Dendritic cell treated with granulocyte-macrophage colony-stimulating factor and Interleukin-4, amounts not matched to agents 40 ng/mL and 50 ng/mL, for 4 days (primary cell): ENCODE measurements at regions of chr7 and their contacts with region 1.

Region 1: DNA sequence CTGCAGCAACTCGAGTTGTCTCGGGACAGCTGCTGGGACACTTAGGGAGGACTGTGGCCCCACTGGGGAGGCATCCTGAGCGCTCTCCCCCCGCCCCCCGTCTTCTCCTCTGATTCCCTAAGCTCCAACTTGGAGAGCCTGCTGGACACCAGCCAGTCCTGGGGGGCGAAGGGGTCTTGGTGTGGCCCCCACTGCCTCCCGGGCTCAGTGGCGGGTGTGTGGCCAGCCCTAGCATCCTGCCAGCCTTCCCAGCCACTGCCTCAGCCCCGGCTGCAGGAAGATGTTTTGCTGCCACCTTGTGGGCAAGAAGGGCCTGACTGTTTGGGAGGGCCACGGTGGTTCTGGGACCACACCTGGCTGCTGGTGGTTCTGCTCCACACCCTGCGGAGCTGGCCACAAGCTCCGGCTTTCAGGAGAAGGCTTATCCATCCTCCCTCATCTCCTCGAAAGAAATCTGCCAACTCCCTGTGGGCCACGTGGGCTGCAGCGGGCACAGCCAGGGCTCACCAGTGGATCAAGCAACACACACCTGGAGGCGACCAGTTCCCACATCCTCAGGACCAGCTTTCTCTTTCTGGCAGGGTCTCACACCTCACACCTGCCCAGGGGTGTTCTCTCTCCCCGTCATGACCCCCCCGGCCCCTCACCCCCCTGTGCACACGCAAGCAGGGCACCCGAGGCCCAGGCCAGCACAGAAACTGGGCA is 24.8 kb downstream of the AGAP3 start:
- H3K4me3 Mint-ChIP-seq: no peak overlapping the region
- H3K27ac Mint-ChIP-seq: no peak overlapping the region
- H3K4me1 Mint-ChIP-seq: peaks cover 46% of the 10 kb centered on the region
- H3K27me3 Mint-ChIP-seq: peaks cover 25% of the 10 kb centered on the region

Region 2: DNA sequence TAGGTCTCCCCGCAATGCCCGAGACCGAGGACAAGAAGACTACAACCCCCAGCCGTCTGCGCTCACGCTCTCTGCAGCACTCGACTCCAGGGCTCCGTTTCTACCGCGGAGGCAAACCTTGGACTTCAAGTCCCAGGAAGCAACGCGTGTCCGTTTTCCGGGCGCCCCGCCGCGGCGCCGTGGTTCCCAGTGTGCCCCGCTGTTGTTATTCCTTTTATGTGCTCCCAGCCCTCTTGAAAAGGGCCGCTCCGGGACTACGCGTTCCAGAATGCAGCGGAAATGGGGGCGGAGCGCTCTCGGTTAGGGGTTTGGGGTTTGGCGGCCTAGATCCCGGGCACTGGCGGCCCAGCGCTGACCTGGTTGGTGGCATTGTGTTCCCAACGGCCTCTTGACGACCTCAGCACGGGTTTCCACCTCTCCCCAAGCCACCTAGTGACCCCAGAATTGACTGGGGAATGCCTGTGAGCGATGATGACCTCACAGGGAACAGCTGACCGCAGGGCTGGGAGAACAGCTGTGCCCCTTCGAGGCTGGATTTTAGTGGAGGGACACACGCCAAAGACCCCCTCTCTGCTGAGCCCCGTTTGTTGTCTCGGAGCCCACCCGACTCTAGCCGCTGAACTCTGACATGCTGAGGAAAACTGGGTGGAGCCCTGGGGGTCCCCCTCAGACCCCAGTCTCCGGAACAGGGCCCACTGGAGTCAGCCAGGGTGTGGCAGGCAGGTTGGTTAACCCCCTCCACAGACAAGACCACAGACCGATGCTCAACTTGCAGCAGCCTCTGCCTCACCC is 52.9 kb before region 1 on chr7:
- intact Hi-C with region 1: loop called (anchors 10 kb)
- H3K4me3 Mint-ChIP-seq: peak overlapping the region; percentile 91
- H3K27ac Mint-ChIP-seq: peak overlapping the region; percentile 92
- H3K4me1 Mint-ChIP-seq: peaks cover 68% of the 10 kb centered on the region
- H3K27me3 Mint-ChIP-seq: no peaks in the 10 kb centered on the region

Region 3: GRCh38 chr7:151080522-151081169 is 30.4 kb before region 1 on chr7 and contains the start of gene FASTK:
- intact Hi-C with region 1: loop called (anchors 2 kb)
- H3K4me3 Mint-ChIP-seq: peak within 1 kb of the TSS; percentile 86
- H3K27ac Mint-ChIP-seq: peak within 1 kb of the TSS; percentile 89
- H3K4me1 Mint-ChIP-seq: peaks cover 65% of the 10 kb centered on the region
- H3K27me3 Mint-ChIP-seq: no peaks in the 10 kb centered on the region

Region 4: GRCh38 chr7:151232091-151232916 is 121.2 kb after region 1 on chr7 and contains the start of gene CHPF2:
- intact Hi-C with region 1: no loop called
- H3K4me3 Mint-ChIP-seq: peak within 1 kb of the TSS; percentile 98
- H3K27ac Mint-ChIP-seq: peak within 1 kb of the TSS; percentile 96
- H3K4me1 Mint-ChIP-seq: peaks cover 40% of the 10 kb centered on the region
- H3K27me3 Mint-ChIP-seq: peaks cover 1% of the 10 kb centered on the region